ENCODE measurements at regions of chr16 and their contacts with region 1.

Region 1: DNA sequence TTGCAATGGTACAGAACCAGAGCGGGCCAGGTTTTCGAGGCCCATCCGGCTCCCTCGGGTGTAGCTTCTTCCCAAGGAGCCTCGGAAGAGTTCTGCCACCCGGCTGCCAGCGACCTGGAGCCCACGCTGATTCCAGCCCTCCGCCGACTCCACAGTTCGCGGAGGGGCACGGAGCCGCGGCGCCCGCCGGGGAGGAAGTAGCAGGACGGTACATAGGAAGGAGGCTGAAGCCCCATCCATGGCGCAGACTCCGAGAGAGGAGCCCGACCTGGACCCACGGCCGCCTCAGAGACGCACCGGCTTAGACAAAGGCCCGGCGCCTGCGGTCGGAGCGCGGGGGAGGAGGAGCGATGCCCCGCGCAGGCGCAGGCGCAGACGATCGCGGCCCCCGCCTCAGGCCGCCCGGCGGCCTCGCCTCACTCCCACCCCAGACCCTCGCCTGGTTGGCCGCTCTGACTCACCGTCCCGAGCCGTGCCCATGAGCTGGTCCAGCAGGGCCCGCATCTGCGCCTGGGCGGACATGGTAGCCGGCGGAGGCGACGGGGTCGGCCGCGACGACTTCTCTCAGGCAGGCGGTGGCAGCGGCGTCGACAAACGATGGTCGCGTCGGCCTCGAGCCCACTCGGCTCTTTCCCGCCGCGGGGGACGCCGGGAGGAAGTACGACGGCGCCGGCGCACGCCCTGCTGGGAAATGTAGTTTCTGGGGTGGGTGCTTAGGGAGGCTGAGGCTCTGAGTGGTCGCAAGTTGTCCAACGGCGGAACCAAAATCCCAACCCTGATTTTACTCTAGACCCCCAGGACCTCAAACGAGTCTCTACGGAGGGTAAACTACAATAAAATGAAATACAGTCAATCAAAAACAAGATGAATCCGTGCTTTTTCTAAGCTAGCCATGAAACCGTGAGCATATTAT is at the start of gene LUC7L:
- DNase-seq: peak; percentile 76 to 95 (median 82)
- ATAC-seq: peak; percentile 88 to 97 (median 95)
- H3K4me3 ChIP-seq: peak within 1 kb of the TSS; percentile 84 to 98 (median 88)
- H3K27ac ChIP-seq: peak within 1 kb of the TSS; percentile 89 to 94 (median 92)
- H3K4me1 ChIP-seq: peaks cover 6 to 16% (median 10%) of the 10 kb centered on the region in 3 donors
- H3K27me3 ChIP-seq: no peaks in the 10 kb centered on the region
- CTCF ChIP-seq: no peak
- total RNA-seq, gene LUC7L: 20.6 to 54.4 (median 31.8) TPM

Region 2: DNA sequence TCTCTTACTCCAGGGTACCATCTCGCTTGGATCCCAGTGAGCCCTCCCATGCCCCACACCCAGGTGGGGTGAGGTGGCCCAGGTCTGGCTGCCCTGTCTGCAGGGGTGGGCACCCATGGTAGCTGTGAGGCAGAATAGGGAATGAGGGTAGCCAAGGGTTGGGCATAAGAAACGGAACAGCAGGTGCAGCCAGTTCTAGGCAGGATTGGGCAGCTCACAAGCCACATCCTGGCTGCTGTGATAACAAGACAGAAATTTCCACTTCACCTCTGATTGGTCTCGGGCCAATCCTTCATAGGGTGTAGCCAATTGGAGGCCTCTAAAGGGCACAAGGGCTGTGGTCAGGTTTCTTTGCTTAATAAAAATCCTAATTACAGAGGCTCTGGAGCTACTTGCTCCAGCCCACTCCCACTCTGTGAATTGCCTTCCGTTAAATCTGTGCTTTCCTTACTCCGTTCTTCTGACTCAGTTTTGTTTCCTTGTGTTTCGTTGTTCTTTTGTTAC is 49.8 kb after region 1 on chr16:
- intact Hi-C with region 1: loop called in 1 of 3 experiments (anchors 5 kb)
- DNase-seq: peak; percentile 53 to 86 (median 78)
- ATAC-seq: peak; percentile 51 to 76 (median 65)
- H3K4me3 ChIP-seq: peak overlapping the region in 1 of 4 donors; percentile 65
- H3K27ac ChIP-seq: peak overlapping the region in 2 of 4 donors; percentile 72 to 77
- H3K4me1 ChIP-seq: peaks cover 0 to 8% (median 6%) of the 10 kb centered on the region in 3 donors
- H3K27me3 ChIP-seq: no peaks in the 10 kb centered on the region
- CTCF ChIP-seq: no peak

Measured in pancreas (tissue), 10 donors.